ENCODE measurements at regions of chr4 and their contacts with region 1.

Region 1: GRCh38 chr4:77075869-77076799 is at the start of gene CCNI:
- DNase-seq: peak; percentile 93
- ATAC-seq: peak; percentile 77
- H3K4me3 Mint-ChIP-seq: no peak within 1 kb of the TSS
- H3K27ac Mint-ChIP-seq: peak within 1 kb of the TSS; percentile 100
- H3K4me1 Mint-ChIP-seq: peaks cover 40% of the 10 kb centered on the region
- H3K27me3 Mint-ChIP-seq: no peaks in the 10 kb centered on the region
- CTCF ChIP-seq: no peak
- total RNA-seq, gene CCNI: 237 and 246 TPM in 2 replicates

Region 2: DNA sequence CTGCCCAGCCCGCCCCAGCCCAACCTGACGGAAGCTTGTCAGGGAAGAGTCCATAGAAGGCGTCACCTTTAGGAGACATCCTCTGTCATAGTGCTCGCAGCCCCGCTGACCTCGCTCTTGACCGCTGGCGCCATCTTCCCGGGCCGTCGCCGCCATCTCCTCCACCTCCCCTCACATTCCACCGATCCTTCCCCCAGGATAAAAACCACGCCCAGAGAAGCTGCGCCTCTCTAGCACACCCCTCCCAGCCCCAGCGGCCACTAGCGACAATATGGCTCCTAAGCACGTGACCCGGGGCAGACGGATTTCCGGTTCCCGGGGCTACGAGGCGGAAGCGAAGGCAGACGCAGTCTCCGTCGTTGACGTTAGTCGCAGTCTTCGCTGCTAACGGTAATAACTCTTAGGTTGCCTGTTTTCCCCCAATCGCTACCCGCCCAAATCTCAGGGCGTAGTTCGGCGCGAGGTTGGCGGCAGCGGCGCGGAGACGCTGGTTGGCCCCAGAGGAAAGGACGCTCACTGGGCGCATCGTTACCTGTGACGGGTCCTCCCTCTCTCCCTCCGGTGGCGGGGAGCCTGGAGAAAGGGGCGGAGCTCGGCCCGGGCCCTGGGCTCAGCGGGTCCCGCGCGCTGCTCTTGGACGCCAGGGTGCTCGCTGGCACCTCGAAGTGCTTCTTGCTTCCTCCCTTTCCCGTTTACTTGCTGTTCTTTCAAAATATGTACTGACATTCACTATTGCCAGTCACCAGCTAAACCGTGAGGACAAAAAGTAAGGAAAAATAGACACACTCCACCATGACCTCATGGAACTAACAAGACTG is 1561.8 kb before region 1 on chr4 and contains the starts of genes RCHY1 and THAP6:
- CTCF ChIA-PET with region 1: no interaction called
- POLR2A ChIA-PET with region 1: interaction called, 4 read pairs
- intact Hi-C with region 1: loop called (anchors 10 kb)
- DNase-seq: peak; percentile 88
- ATAC-seq: peak; percentile 87
- H3K4me3 Mint-ChIP-seq: no peak within 1 kb of the TSS
- H3K27ac Mint-ChIP-seq: peak within 1 kb of the TSS; percentile 95
- H3K4me1 Mint-ChIP-seq: peaks cover 39% of the 10 kb centered on the region
- H3K27me3 Mint-ChIP-seq: no peaks in the 10 kb centered on the region
- CTCF ChIP-seq: no peak
- total RNA-seq, gene RCHY1: 28.5 and 29.6 TPM in 2 replicates
- total RNA-seq, gene THAP6: 17.4 and 24.6 TPM in 2 replicates

Region 3: GRCh38 chr4:76923619-76924357 is 152.3 kb before region 1 on chr4:
- CTCF ChIA-PET with region 1: no interaction called
- POLR2A ChIA-PET with region 1: no interaction called
- intact Hi-C with region 1: no loop called
- DNase-seq: no peak
- ATAC-seq: no peak
- H3K4me3 Mint-ChIP-seq: no peak overlapping the region
- H3K27ac Mint-ChIP-seq: no peak overlapping the region
- H3K4me1 Mint-ChIP-seq: no peaks in the 10 kb centered on the region
- H3K27me3 Mint-ChIP-seq: no peaks in the 10 kb centered on the region
- CTCF ChIP-seq: no peak

Region 4: GRCh38 chr4:76949276-76950051 is 126.7 kb before region 1 on chr4 and contains the start of gene SEPTIN11:
- CTCF ChIA-PET with region 1: no interaction called
- POLR2A ChIA-PET with region 1: interaction called, 9 read pairs
- intact Hi-C with region 1: loop called (anchors 1 kb)
- DNase-seq: peak; percentile 77
- ATAC-seq: peak; percentile 76
- H3K4me3 Mint-ChIP-seq: peak within 1 kb of the TSS; percentile 90
- H3K27ac Mint-ChIP-seq: peak within 1 kb of the TSS; percentile 68
- H3K4me1 Mint-ChIP-seq: peaks cover 15% of the 10 kb centered on the region
- H3K27me3 Mint-ChIP-seq: no peaks in the 10 kb centered on the region
- CTCF ChIP-seq: no peak
- total RNA-seq, gene SEPTIN11: 22.3 and 22.4 TPM in 2 replicates

Region 5: DNA sequence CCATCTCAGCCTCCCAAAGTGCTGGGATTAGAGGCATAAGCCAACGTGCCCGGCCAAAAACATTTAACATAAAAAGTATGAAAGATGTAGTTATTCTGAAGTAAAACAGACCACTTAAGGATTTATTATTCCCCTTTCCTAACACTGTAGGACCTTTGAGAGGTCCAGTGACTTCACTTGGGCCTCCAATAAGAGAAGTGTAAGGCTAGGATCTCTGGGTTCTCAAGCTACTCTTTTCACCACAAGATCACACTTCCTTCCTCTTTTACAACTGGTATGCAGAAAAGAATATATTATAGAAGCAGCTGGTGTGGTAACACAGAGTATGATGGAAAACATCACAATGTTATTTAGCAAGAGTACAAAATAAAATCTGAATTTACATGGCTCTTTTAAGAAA is 50.7 kb after region 1 on chr4:
- CTCF ChIA-PET with region 1: no interaction called
- POLR2A ChIA-PET with region 1: interaction called, 16 read pairs
- intact Hi-C with region 1: loop called (anchors 1 kb)
- DNase-seq: no peak
- ATAC-seq: peak; percentile 79
- H3K4me3 Mint-ChIP-seq: peak overlapping the region; percentile 59
- H3K27ac Mint-ChIP-seq: peak overlapping the region; percentile 89
- H3K4me1 Mint-ChIP-seq: peaks cover 74% of the 10 kb centered on the region
- H3K27me3 Mint-ChIP-seq: no peaks in the 10 kb centered on the region
- CTCF ChIP-seq: no peak

Region 6: GRCh38 chr4:77203380-77204197 is 127.5 kb after region 1 on chr4:
- CTCF ChIA-PET with region 1: interaction called, 20 read pairs
- POLR2A ChIA-PET with region 1: interaction called, 7 read pairs
- intact Hi-C with region 1: no loop called
- DNase-seq: peak; percentile 35
- ATAC-seq: peak; percentile 88
- H3K4me3 Mint-ChIP-seq: no peak overlapping the region
- H3K27ac Mint-ChIP-seq: no peak overlapping the region
- H3K4me1 Mint-ChIP-seq: peaks cover 4% of the 10 kb centered on the region
- H3K27me3 Mint-ChIP-seq: no peaks in the 10 kb centered on the region
- CTCF ChIP-seq: peak; percentile 86

Region 7: DNA sequence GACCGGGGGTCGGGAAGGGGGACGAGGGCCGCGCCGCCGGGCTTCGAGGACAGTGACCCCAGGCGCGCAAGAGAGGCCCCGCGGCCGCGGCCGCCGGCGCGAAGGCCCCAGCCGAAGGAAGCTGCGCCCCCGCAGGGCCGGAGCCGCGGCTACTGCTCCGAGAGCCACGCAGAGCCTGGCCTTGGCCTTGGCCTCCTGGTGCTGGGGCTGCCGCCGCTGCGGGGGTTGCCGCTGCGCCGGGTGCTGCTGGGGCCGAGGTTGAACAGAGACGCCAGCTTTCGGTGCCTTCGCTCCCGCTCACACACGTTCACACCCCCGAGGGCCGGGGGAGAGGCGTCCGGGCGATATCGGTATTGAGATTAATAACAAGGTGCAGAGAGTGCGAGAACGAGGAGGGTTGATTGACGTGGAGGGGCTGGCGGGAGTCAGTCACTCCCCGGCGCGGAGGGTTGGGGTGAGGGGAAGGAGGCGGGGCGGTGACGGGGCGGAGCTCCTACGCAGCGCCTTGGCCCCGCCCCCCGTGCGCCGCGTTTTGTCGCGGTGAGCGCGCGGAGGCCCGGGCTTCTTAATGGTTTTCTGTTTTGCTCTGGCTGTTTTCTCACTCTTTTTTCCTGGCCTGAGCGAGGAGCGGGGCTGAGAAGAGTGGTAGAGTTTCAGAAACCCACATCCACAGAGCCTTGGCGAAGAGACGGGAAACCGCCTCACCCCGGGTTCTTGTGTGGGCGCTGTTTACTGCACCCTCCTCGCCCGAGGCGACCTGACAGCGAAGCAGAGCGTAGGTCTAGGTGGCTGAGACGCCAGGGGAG is 743.9 kb after region 1 on chr4:
- CTCF ChIA-PET with region 1: no interaction called
- POLR2A ChIA-PET with region 1: interaction called, 9 read pairs
- intact Hi-C with region 1: loop called (anchors 1 kb)
- DNase-seq: peak; percentile 92
- ATAC-seq: peak; percentile 74
- H3K4me3 Mint-ChIP-seq: peak overlapping the region; percentile 95
- H3K27ac Mint-ChIP-seq: peak overlapping the region; percentile 96
- H3K4me1 Mint-ChIP-seq: peaks cover 57% of the 10 kb centered on the region
- H3K27me3 Mint-ChIP-seq: no peaks in the 10 kb centered on the region
- CTCF ChIP-seq: no peak

Measured in activated B cell treated with CpG ODN at 0.5 μM for 24 hours (primary cell).